Activated naive CD4-positive, alpha-beta T cell treated with anti-CD3 and anti-CD28 coated beads for 36 hours (primary cell): ENCODE measurements at regions of chr5 and their contacts with region 1.

Region 1: DNA sequence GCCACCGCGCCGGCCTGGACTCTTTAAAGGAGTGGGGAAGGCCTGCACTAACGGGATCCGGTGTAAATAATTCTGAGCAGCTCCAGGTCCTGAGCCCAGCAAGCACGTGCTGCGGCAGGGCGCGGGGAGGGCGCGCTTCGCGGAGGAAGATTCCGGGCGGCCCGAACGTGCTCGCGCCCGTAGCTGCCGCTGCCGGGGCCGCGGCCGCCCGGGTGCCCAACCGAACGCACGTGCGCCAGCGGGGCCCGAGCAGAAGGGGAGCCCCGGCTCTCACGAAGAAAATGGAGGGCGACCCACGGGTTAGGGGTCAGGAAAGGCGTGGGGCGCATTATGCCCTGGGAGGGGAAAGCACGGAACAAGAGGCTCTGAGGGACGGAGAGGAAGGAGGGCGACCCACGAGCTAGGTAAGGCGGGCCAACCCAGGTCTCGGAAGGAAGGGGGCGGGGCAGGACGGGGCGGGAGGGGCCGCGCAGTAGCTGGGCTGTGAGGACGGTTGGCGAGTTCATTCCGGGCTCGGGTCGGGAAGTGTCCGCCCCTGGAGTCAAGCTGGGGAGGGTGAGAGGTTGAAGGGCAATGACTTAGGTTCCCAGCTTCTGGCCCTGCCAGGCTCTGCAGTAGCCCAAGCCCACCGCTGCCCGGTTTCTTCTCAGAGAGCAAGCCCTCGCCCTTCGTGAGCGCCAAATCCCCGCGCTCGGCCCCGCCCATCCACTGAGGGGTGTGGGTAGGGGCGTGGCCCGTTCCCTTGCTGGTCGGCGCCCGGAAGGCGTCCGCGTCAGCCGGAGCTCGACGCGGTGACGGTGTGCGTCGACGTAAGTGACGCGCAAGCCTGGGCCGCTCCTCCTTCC is at the start of gene ZNF131:
- DNase-seq: peak; percentile 96
- H3K4me3 Mint-ChIP-seq: peak within 1 kb of the TSS; percentile 99
- H3K27ac Mint-ChIP-seq: peak within 1 kb of the TSS; percentile 96
- H3K4me1 Mint-ChIP-seq: peaks cover 38% of the 10 kb centered on the region
- H3K27me3 Mint-ChIP-seq: no peaks in the 10 kb centered on the region
- total RNA-seq, gene ZNF131: 25.0 to 29.6 TPM

Region 2: GRCh38 chr5:42950440-42951292 is 170.3 kb before region 1 on chr5:
- CTCF ChIA-PET with region 1: interaction called, 3 read pairs
- intact Hi-C with region 1: loop called (anchors 5 kb)
- DNase-seq: peak; percentile 83
- H3K4me3 Mint-ChIP-seq: peak overlapping the region; percentile 87
- H3K27ac Mint-ChIP-seq: peak overlapping the region; percentile 88
- H3K4me1 Mint-ChIP-seq: peaks cover 9% of the 10 kb centered on the region
- H3K27me3 Mint-ChIP-seq: no peaks in the 10 kb centered on the region

Region 3: DNA sequence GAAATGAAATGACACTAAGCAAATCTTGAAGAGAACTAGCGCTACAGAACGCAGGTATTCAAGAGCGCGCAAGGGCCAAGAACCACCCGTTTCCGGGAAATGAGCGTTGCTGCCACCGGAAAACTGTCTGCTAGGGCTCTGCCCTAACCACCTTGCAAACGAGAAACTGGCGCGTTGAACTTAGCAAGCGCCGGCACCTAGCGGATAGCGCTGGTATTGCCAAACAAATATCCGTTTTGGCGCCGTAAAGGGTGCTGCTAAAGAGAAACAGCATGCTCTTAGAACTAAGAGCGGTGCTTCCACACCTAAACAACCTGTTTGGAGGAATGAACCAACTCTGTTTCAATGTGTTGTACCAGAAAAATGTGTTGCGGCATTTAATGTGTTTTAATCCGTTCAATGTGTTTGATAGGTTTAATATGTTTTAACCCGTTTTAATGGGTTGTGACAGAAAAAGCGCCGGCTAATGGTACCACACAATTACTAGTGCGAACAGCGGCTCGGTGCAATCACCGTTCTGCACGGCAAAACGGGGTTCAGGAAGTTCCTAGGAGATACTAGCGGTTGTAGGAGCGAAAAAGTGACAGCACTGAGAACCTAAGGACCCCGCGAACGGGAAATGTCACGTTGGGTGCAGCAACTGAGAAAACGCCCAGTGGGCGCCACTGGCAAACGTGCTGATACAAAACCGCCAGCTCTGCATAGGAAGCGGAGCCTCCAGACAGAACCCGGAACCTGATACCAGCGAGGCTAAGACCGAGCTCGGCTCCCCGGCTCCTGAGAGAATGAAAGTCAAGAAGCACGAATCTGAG is 80.4 kb before region 1 on chr5 and contains the start of gene ANXA2R:
- CTCF ChIA-PET with region 1: interaction called, 4 read pairs
- intact Hi-C with region 1: loop called (anchors 1 kb)
- DNase-seq: peak; percentile 98
- H3K4me3 Mint-ChIP-seq: peak within 1 kb of the TSS; percentile 96
- H3K27ac Mint-ChIP-seq: peak within 1 kb of the TSS; percentile 99
- H3K4me1 Mint-ChIP-seq: peaks cover 26% of the 10 kb centered on the region
- H3K27me3 Mint-ChIP-seq: no peaks in the 10 kb centered on the region
- total RNA-seq, gene ANXA2R: 6.0 to 6.5 TPM

Region 4: DNA sequence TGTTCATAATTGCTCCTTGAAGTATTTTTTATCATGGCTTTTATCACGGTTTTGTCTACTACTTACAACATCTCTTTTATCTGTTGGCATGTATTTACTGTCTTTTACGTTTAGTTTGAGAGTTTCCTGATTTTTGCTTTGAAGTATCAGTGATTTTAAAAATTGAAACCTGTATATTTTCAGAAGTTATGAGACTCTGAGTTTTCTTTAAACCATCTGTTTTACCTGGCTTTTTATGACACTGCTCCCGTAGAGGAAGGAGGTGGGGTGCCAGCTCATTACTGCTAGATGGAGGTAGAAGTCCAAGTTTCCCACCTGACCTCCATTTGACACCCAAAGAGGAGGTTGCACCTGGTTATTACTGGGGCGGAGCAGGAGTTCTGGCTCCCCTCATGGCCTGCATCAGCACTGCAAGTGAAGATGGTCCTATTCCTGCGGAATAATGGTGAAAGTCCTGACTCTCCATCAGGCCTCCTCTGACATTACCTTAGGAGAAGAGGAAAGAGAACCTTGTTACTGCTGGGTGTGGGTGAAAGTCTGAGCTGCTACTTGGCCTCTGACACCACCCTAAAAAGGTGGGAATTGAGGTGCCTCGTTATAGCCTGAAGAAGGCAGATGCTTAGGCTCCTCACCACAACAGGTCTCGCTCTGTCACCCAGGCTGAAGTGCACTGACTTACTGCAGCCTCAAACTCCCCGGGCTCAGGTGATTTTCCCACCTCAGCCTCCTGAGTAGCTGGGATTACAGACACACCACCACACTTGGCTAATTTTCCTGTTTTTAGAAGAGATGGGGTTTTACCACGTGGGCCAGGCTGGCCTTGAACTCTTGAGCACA is 10.1 kb before region 1 on chr5:
- CTCF ChIA-PET with region 1: interaction called, 108 read pairs
- intact Hi-C with region 1: loop called (anchors 1 kb)
- DNase-seq: peak; percentile 81
- H3K4me3 Mint-ChIP-seq: no peak overlapping the region
- H3K27ac Mint-ChIP-seq: peak overlapping the region; percentile 71
- H3K4me1 Mint-ChIP-seq: peaks cover 43% of the 10 kb centered on the region
- H3K27me3 Mint-ChIP-seq: no peaks in the 10 kb centered on the region

Region 5: DNA sequence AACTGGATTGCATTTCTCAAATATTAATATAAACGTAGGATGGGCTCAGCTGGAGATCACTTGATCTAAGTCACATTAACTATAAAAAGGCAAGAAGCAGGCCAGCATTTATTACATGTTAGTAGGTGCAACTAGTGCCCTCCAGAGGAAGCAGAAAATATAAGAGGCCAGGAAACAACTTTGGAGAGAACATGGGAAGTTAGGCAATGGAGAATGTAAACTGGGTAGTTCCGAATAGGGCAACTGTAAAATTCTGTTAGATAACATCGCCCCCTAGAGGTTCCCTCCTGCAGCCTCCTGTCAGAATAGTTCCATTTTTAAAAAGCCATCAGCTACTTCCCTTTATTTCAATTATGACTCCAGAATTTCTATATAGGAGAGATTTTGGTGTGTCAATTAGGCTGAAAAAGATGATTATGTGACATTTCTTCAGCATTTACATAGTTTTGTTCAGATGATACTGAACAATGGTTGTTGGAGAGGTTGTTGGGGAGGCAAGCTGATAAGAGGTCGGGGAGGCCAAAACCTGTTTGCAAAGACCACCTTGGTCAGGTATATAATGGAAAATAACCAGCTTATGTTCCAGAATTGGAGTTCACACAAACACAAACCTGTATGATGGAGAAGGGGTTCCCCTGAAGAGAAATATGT is 268.9 kb after region 1 on chr5:
- CTCF ChIA-PET with region 1: interaction called, 10 read pairs
- intact Hi-C with region 1: no loop called
- DNase-seq: peak; percentile 72
- H3K4me3 Mint-ChIP-seq: no peak overlapping the region
- H3K27ac Mint-ChIP-seq: no peak overlapping the region
- H3K4me1 Mint-ChIP-seq: peaks cover 32% of the 10 kb centered on the region
- H3K27me3 Mint-ChIP-seq: no peaks in the 10 kb centered on the region

Region 6: DNA sequence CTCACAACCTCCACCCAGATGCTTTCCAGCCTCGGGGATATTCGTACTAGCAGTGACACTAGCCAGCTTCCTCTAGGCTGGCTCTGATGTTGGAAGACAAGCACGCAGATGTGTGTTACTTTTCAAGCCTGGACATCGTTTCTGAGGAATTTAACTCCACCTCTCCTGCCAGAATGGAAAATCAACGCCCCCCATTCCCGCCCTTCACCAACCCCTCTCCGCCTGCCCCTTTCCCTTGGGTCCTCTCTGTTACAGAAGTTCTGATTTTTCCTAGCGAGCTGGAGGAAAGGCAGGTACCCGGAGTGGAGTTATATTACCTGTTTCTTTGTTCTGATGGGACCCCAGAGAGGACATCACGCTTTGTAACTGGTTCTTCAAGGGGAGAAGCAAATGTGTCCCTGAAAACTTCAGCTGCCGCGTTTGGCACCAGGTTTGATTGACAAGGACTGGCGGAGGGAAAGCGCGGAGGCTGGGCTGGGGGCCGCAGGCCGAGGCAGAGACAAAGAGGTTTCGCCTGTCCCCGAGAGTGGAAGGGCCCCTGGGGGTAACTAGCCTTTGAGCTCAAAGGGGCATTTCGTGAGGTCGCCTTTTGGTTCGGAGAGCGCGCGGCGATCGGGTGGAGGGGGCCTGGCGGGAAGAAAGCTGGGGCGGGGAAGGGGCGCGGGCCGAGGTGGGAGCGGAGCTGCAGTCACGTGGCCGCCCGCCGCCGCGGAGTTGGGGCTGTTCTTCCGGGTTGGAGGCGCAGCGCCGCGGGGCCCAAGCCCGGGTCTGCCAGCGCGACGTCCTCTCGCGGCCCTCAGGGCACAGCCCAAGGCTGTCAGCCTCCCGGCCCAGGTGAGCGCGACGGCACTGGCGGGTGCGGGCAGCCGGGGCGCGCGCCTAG is 481.8 kb after region 1 on chr5 and contains the start of gene NNT:
- CTCF ChIA-PET with region 1: no interaction called
- intact Hi-C with region 1: loop called (anchors 2 kb)
- DNase-seq: peak; percentile 74
- H3K4me3 Mint-ChIP-seq: peak within 1 kb of the TSS; percentile 87
- H3K27ac Mint-ChIP-seq: peak within 1 kb of the TSS; percentile 92
- H3K4me1 Mint-ChIP-seq: peaks cover 45% of the 10 kb centered on the region
- H3K27me3 Mint-ChIP-seq: no peaks in the 10 kb centered on the region
- total RNA-seq, gene NNT: 98.4 to 98.9 TPM